ENCODE measurements at regions of chr5 and their contacts with region 1.

Region 1: GRCh38 chr5:108381954-108382783 is at the start of gene FBXL17:
- DNase-seq: peak; percentile 94
- ATAC-seq: peak; percentile 76
- H3K4me3 Mint-ChIP-seq: peak within 1 kb of the TSS; percentile 93
- H3K27ac Mint-ChIP-seq: peak within 1 kb of the TSS; percentile 97
- H3K4me1 Mint-ChIP-seq: peaks cover 25% of the 10 kb centered on the region
- H3K27me3 Mint-ChIP-seq: no peaks in the 10 kb centered on the region
- total RNA-seq, gene FBXL17: 6.6 to 9.4 TPM

Region 2: GRCh38 chr5:109409844-109410388 is 1027.7 kb after region 1 on chr5 and contains the start of gene PJA2:
- CTCF ChIA-PET with region 1: no interaction called
- POLR2A ChIA-PET with region 1: interaction called, 10 read pairs
- DNase-seq: peak; percentile 97
- ATAC-seq: peak; percentile 86
- H3K4me3 Mint-ChIP-seq: peak within 1 kb of the TSS; percentile 100
- H3K27ac Mint-ChIP-seq: peak within 1 kb of the TSS; percentile 100
- H3K4me1 Mint-ChIP-seq: peaks cover 32% of the 10 kb centered on the region
- H3K27me3 Mint-ChIP-seq: no peaks in the 10 kb centered on the region
- total RNA-seq, gene PJA2: 50.2 to 53.5 TPM

Measured in activated CD8-positive, alpha-beta T cell treated with anti-CD3 and anti-CD28 coated beads, Interleukin-2, amount 10 ng/mL, durations not matched to agents 7 days and 5 days (primary cell).